ENCODE measurements at regions of chr17 and their contacts with region 1.

Region 1: GRCh38 chr17:511001-511698 is 158.5 kb upstream of the RPH3AL start:
- DNase-seq: peak; percentile 55
- H3K4me3 ChIP-seq: no peak overlapping the region
- H3K27ac ChIP-seq: no peak overlapping the region
- H3K4me1 ChIP-seq: peaks cover 35% of the 10 kb centered on the region
- H3K27me3 ChIP-seq: no peaks in the 10 kb centered on the region
- CTCF ChIP-seq: no peak

Region 2: GRCh38 chr17:422196-422930 is 88.8 kb before region 1 on chr17:
- CTCF ChIA-PET with region 1: no interaction called
- dilution Hi-C with region 1: no loop called
- in situ Hi-C with region 1: no loop called
- intact Hi-C with region 1: no loop called
- DNase-seq: no peak
- H3K4me3 ChIP-seq: no peak overlapping the region
- H3K27ac ChIP-seq: no peak overlapping the region
- H3K4me1 ChIP-seq: no peaks in the 10 kb centered on the region
- H3K27me3 ChIP-seq: no peaks in the 10 kb centered on the region
- CTCF ChIP-seq: no peak

Region 3: GRCh38 chr17:622356-622755 is 111.2 kb after region 1 on chr17:
- CTCF ChIA-PET with region 1: interaction called, 13 read pairs
- dilution Hi-C with region 1: no loop called
- in situ Hi-C with region 1: no loop called
- intact Hi-C with region 1: loop called (anchors 1 kb)
- DNase-seq: peak; percentile 57
- H3K4me3 ChIP-seq: no peak overlapping the region
- H3K27ac ChIP-seq: no peak overlapping the region
- H3K4me1 ChIP-seq: peaks cover 15% of the 10 kb centered on the region
- H3K27me3 ChIP-seq: no peaks in the 10 kb centered on the region
- CTCF ChIP-seq: no peak

Region 4: GRCh38 chr17:640436-640835 is 129.3 kb after region 1 on chr17:
- CTCF ChIA-PET with region 1: no interaction called
- dilution Hi-C with region 1: no loop called
- in situ Hi-C with region 1: no loop called
- intact Hi-C with region 1: no loop called
- DNase-seq: no peak
- H3K4me3 ChIP-seq: no peak overlapping the region
- H3K27ac ChIP-seq: no peak overlapping the region
- H3K4me1 ChIP-seq: peaks cover 4% of the 10 kb centered on the region
- H3K27me3 ChIP-seq: no peaks in the 10 kb centered on the region
- CTCF ChIP-seq: no peak

Region 5: DNA sequence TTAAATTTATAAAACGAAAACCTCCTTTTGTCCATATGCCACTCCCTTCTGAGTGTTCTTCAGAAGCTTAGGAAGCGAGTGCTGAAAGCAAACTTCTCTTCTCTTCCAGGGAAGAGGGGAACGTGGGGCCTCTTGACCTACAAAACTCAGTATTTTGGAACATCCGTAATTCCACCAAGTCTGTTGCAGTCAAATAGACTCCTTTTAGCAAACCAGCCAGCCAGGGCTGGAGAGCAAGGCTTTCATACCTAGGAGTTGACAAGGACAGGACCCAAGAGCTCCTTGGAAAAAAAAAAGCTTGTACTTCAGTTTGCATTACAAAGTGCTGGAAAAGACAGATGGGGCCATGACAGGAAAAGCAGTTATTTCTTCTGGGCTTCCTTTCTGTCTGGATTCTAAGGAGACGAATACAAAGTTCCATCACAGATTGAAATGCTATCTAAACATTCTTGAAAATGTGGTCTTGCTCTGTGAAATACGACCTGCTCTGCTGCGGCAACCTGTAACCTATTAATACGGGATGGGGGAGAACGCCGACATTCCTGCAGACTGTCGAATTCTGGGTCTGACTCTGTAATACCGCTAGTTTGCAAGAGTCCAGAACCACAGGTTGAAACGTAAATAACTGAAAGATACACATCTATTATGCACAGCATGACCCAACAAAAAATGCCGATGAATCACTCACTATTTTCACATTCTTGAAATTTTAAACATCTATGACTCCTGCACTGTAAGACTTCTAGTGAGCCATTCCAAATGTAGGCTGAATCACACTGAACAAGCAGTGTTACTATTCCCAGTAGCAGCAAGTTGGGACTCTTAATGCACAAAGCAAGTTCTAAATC is 182.9 kb after region 1 on chr17:
- CTCF ChIA-PET with region 1: no interaction called
- dilution Hi-C with region 1: no loop called
- in situ Hi-C with region 1: no loop called
- intact Hi-C with region 1: loop called (anchors 5 kb)
- DNase-seq: peak; percentile 95
- H3K4me3 ChIP-seq: no peak overlapping the region
- H3K27ac ChIP-seq: peak overlapping the region; percentile 69
- H3K4me1 ChIP-seq: peaks cover 47% of the 10 kb centered on the region
- H3K27me3 ChIP-seq: no peaks in the 10 kb centered on the region
- CTCF ChIP-seq: no peak